ENCODE measurements at regions of chr2 and their contacts with region 1.

Region 1: GRCh38 chr2:61888267-61889055 is at the start of gene CCT4:
- DNase-seq: peak; percentile 86 to 99 (median 95)
- ATAC-seq: peak; percentile 94
- H3K4me3 ChIP-seq: peak within 1 kb of the TSS; percentile 92
- H3K4me3 Mint-ChIP-seq: peak within 1 kb of the TSS; percentile 85 to 100 (median 99)
- H3K27ac ChIP-seq: peak within 1 kb of the TSS; percentile 98
- H3K27ac Mint-ChIP-seq: peak within 1 kb of the TSS; percentile 98 to 100 (median 100)
- H3K4me1 ChIP-seq: peaks cover 15 to 17% of the 10 kb centered on the region in 2 donors
- H3K4me1 Mint-ChIP-seq: peaks cover 11 to 34% (median 29%) of the 10 kb centered on the region in 7 donors
- H3K27me3 ChIP-seq: no peaks in the 10 kb centered on the region
- H3K27me3 Mint-ChIP-seq: no peaks in the 10 kb centered on the region
- total RNA-seq, gene CCT4: 84.2 to 177 (median 90.3) TPM

Region 2: GRCh38 chr2:61016808-61017555 is 871.5 kb before region 1 on chr2:
- CTCF ChIA-PET with region 1: no interaction called
- POLR2A ChIA-PET with region 1: no interaction called
- intact Hi-C with region 1: loop called in 1 of 2 experiments (anchors 2 kb)
- DNase-seq: peak; percentile 41 to 75 (median 72)
- ATAC-seq: peak; percentile 79
- H3K4me3 ChIP-seq: peak overlapping the region; percentile 100
- H3K4me3 Mint-ChIP-seq: peak overlapping the region; percentile 93 to 100 (median 97)
- H3K27ac ChIP-seq: peak overlapping the region; percentile 75
- H3K27ac Mint-ChIP-seq: peak overlapping the region; percentile 90 to 99 (median 95)
- H3K4me1 ChIP-seq: peaks cover 14 to 20% of the 10 kb centered on the region in 2 donors
- H3K4me1 Mint-ChIP-seq: peaks cover 23 to 68% (median 48%) of the 10 kb centered on the region in 7 donors
- H3K27me3 ChIP-seq: no peaks in the 10 kb centered on the region
- H3K27me3 Mint-ChIP-seq: no peaks in the 10 kb centered on the region

Region 3: GRCh38 chr2:61144697-61145268 is 743.7 kb before region 1 on chr2:
- CTCF ChIA-PET with region 1: no interaction called
- POLR2A ChIA-PET with region 1: no interaction called
- intact Hi-C with region 1: loop called in 1 of 2 experiments (anchors 10 kb)
- DNase-seq: peak; percentile 74 to 90 (median 86)
- ATAC-seq: peak; percentile 92
- H3K4me3 ChIP-seq: peak overlapping the region; percentile 82
- H3K4me3 Mint-ChIP-seq: peak overlapping the region; percentile 88 to 98 (median 94)
- H3K27ac ChIP-seq: peak overlapping the region; percentile 73
- H3K27ac Mint-ChIP-seq: peak overlapping the region; percentile 90 to 98 (median 95)
- H3K4me1 ChIP-seq: peaks cover 4 to 5% of the 10 kb centered on the region in 2 donors
- H3K4me1 Mint-ChIP-seq: peaks cover 0 to 18% (median 7%) of the 10 kb centered on the region in 7 donors
- H3K27me3 ChIP-seq: no peaks in the 10 kb centered on the region
- H3K27me3 Mint-ChIP-seq: peaks cover 0 to 2% (median 0%) of the 10 kb centered on the region in 5 donors

Region 4: DNA sequence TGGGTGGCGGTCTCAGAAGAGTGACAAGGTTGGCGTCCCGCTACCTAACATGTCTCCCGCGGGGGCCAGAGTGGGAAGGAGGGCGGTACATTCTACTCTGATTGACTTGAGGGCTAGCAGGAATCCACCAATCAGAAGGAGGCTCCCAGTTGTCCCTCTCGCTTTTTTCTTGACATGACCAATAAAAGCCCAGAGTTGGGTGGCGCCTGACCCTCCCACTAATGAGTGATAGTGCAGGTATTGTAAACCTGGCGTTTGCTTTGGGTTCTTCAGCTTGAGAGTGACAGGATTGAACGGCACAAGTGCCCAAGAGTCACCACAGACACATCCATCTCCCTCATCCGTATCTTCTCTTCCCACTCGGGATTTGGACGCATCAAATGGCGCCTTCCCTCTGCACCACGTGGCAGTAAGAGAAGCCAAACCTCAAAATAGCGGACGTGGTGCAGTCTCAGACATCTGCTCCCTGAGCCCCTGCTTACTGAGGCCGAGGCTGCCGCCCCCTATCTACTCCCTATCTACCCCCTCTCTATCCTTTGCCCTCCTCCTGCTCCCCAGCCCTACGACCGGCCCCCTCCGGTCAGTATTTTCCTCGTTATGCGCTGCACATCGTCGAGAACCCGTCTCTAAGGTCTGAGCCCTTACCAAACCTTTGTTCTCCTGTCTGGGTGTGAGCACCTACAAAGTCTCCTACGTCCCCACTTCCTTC is 33.8 kb before region 1 on chr2:
- CTCF ChIA-PET with region 1: no interaction called
- POLR2A ChIA-PET with region 1: interaction called, 9 read pairs
- intact Hi-C with region 1: loop called (anchors 1 kb)
- DNase-seq: peak; percentile 61 to 96 (median 94)
- ATAC-seq: peak; percentile 95
- H3K4me3 ChIP-seq: peak overlapping the region; percentile 100
- H3K4me3 Mint-ChIP-seq: peak overlapping the region; percentile 92 to 99 (median 96)
- H3K27ac ChIP-seq: peak overlapping the region; percentile 77
- H3K27ac Mint-ChIP-seq: peak overlapping the region; percentile 90 to 98 (median 95)
- H3K4me1 ChIP-seq: peaks cover 4 to 6% of the 10 kb centered on the region in 2 donors
- H3K4me1 Mint-ChIP-seq: peaks cover 10 to 27% (median 17%) of the 10 kb centered on the region in 7 donors
- H3K27me3 ChIP-seq: no peaks in the 10 kb centered on the region
- H3K27me3 Mint-ChIP-seq: no peaks in the 10 kb centered on the region

Region 5: GRCh38 chr2:62089658-62090057 is 201.2 kb after region 1 on chr2:
- CTCF ChIA-PET with region 1: no interaction called
- POLR2A ChIA-PET with region 1: no interaction called
- intact Hi-C with region 1: no loop called
- DNase-seq: no peak
- ATAC-seq: no peak
- H3K4me3 ChIP-seq: no peak overlapping the region
- H3K4me3 Mint-ChIP-seq: no peak overlapping the region
- H3K27ac ChIP-seq: no peak overlapping the region
- H3K27ac Mint-ChIP-seq: no peak overlapping the region
- H3K4me1 ChIP-seq: no peaks in the 10 kb centered on the region
- H3K4me1 Mint-ChIP-seq: peaks cover 0 to 7% (median 0%) of the 10 kb centered on the region in 7 donors
- H3K27me3 ChIP-seq: no peaks in the 10 kb centered on the region
- H3K27me3 Mint-ChIP-seq: no peaks in the 10 kb centered on the region

Region 6: DNA sequence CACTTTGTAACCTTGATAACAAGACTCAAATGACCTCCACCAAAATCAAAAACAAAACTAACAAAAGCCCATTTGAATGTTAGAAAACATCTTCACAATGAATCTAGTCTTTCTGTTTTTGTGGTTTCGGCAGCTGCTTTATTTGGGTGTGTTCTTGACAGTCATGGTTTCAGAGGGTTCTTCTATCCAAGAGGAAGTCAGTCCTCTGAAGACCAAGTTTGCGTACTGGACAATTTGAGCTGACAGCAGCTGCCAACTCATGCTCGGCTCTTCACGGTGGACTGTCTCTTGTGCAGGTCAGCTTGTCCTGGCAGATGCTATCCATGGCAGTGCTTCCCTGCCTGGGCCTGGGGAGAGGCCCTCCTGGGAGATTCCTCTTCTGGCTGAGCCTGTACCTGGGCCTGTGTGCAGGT is 526.6 kb after region 1 on chr2:
- CTCF ChIA-PET with region 1: no interaction called
- POLR2A ChIA-PET with region 1: no interaction called
- intact Hi-C with region 1: loop called in 1 of 2 experiments (anchors 1 kb)
- DNase-seq: no peak
- ATAC-seq: peak; percentile 29
- H3K4me3 ChIP-seq: no peak overlapping the region
- H3K4me3 Mint-ChIP-seq: peak overlapping the region in 1 of 10 donors; percentile 15
- H3K27ac ChIP-seq: no peak overlapping the region
- H3K27ac Mint-ChIP-seq: peak overlapping the region in 2 of 9 donors; percentile 19 to 23
- H3K4me1 ChIP-seq: peaks cover 0 to 7% of the 10 kb centered on the region in 2 donors
- H3K4me1 Mint-ChIP-seq: peaks cover 0 to 14% (median 0%) of the 10 kb centered on the region in 7 donors
- H3K27me3 ChIP-seq: no peaks in the 10 kb centered on the region
- H3K27me3 Mint-ChIP-seq: peaks cover 0 to 10% (median 5%) of the 10 kb centered on the region in 5 donors